GM10248 (cell line): ENCODE measurements at regions of chr3 and their contacts with region 1.

Region 1: DNA sequence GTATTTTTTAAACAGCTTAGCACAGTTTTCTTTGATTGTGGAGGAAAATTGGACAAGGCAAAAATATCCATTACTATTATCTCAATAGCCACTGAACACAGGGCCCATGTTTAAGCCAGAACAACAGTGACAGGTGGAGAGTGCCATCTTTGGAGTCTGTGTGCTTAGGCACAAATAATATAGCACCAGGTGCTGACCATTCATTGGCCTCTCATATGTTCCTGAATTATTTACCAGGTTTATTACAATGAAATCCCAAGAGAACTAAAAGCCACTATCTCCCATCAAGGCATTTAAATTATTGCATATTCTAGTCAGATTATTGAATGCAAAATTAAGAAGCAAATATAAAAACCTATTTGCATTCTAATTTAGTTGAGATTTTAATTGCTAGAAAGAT is 39.6 kb downstream of the GPR156 start:
- DNase-seq: no peak
- CTCF ChIP-seq: no peak

Region 2: GRCh38 chr3:120113128-120114116 is 132.0 kb before region 1 on chr3:
- CTCF ChIA-PET with region 1: no interaction called
- POLR2A ChIA-PET with region 1: no interaction called
- DNase-seq: no peak
- CTCF ChIP-seq: no peak

Region 3: DNA sequence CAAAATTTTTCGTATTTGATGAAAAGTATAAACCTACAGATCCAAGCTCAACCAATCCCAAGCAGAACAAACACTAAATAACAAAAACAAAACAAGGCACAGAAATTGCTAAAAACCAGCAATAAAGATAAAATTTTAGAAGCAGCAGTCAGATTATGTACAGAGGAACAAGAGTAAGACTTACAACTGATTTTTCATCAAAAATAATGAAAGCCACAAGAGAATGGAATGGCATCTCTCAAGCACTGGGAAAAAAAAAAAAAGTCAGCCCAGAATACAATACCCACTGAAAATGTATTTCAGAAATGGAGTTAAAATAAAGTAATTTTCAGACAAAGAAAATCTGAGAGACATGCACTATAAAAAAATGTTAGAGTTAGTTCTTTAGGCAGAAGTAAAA is 12.6 kb after region 1 on chr3:
- CTCF ChIA-PET with region 1: interaction called, 14 read pairs
- POLR2A ChIA-PET with region 1: no interaction called
- DNase-seq: no peak
- CTCF ChIP-seq: no peak

Region 4: DNA sequence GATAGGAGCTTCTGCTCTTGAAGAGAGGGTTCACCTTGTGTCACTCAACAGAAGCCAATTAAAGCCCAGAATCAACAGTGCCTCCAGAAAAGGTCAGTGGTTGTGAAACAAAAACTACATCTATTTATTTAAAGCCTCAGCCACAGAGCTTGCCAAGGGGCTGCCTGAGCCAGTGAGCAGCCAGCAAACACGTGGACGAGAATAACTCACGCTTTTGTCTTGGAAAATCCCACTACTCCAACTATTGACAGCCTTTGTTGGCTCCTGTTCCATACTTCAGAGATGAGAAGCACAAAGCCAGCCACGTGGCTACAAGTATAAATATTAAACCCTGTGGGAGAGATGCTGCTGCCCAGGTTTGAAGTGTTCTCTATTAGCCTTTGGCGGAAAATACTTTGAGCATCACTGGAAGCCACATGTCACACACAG is 29.4 kb after region 1 on chr3:
- CTCF ChIA-PET with region 1: interaction called, 12 read pairs
- POLR2A ChIA-PET with region 1: no interaction called
- DNase-seq: no peak
- CTCF ChIP-seq: no peak

Region 5: GRCh38 chr3:120304616-120305015 is 59.2 kb after region 1 on chr3:
- CTCF ChIA-PET with region 1: no interaction called
- POLR2A ChIA-PET with region 1: no interaction called
- DNase-seq: no peak
- CTCF ChIP-seq: no peak

Region 6: GRCh38 chr3:120338517-120338916 is 93.1 kb after region 1 on chr3:
- CTCF ChIA-PET with region 1: no interaction called
- POLR2A ChIA-PET with region 1: no interaction called
- DNase-seq: no peak
- CTCF ChIP-seq: no peak

Region 7: GRCh38 chr3:120410541-120410940 is 165.2 kb after region 1 on chr3:
- CTCF ChIA-PET with region 1: interaction called, 121 read pairs
- POLR2A ChIA-PET with region 1: no interaction called
- DNase-seq: no peak
- CTCF ChIP-seq: no peak

Region 8: DNA sequence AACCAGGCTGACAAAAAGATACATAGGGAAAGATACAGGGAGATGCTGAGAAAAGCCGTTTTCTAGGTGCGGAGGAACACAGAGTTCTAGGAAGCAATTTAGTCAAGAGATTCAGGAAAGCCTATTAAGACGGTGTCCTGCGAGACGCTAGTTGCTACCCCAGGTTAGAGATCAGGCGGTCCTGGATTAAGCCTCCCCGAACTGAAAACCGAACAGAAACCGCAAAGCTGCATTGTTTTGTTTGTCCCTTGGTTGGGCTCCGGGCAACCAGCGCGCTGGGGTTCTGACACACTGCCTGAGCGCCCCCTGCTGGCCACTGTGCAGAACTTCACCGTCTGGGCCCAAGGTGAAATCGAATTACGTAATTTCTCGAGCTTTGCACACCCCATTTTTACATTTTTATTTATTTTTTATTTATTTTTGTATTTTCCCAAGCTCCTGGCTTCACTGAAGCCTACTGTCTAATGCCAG is 313.4 kb after region 1 on chr3:
- CTCF ChIA-PET with region 1: interaction called, 40 read pairs
- POLR2A ChIA-PET with region 1: no interaction called
- DNase-seq: peak; percentile 82
- CTCF ChIP-seq: peak; percentile 99